ENCODE measurements at regions of chr11 and their contacts with region 1.

Region 1: GRCh38 chr11:10653926-10654810 is 39.4 kb downstream of the IRAG1 start:
- DNase-seq: no peak
- ATAC-seq: peak in 5 of 8 donors; percentile 46 to 68 (median 62)
- H3K4me3 ChIP-seq: no peak overlapping the region
- H3K27ac ChIP-seq: peak overlapping the region in 6 of 10 donors; percentile 21 to 77 (median 42)
- H3K4me1 ChIP-seq: peaks cover 5 to 72% (median 30%) of the 10 kb centered on the region in 9 donors
- H3K27me3 ChIP-seq: no peaks in the 10 kb centered on the region
- CTCF ChIP-seq: peak; percentile 36 to 81 (median 74)

Region 2: DNA sequence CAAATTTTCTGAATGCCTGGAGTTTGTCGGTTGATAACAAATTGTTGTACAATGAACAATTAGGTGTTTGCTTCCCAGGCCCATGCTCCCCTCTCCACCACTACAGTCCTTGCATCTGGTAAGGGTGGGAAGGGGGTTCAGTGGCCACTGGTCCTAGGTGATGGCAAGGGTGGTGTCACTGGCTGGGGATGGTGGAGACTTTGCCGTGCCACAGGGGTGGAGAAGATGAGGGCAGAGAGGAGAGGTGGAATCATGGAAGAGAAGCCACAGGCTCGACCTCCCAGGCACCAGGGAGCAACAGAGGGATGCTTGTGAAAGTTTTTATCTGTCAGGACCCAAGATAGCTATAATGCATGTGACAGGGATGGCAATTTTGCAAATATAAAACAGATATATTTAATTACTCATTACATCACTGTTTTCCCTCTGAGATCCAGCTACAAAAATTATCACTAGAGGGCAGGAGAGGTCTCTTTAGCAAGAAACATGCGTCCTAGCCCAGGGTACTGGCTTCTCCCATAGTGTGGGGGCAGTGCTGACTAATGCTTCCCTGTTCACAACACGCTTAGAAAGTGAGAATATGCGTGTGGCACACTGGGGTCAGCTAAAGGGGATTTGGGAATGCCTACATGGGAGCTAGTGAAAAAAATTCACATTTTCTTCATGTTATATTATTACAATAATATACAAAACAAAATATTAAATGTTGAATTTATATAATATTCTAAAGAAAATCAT is 248.1 kb before region 1 on chr11:
- intact Hi-C with region 1: loop called (anchors 2 to 10 kb)
- DNase-seq: peak in 1 of 2 donors; percentile 79
- ATAC-seq: peak; percentile 85 to 94 (median 90)
- H3K4me3 ChIP-seq: no peak overlapping the region
- H3K27ac ChIP-seq: no peak overlapping the region
- H3K4me1 ChIP-seq: peaks cover 0 to 34% (median 13%) of the 10 kb centered on the region in 9 donors
- H3K27me3 ChIP-seq: no peaks in the 10 kb centered on the region
- CTCF ChIP-seq: peak; percentile 52 to 84 (median 78)

Region 3: GRCh38 chr11:10413268-10413667 is 240.9 kb before region 1 on chr11:
- intact Hi-C with region 1: loop called in 8 of 10 experiments (anchors 5 to 10 kb)
- DNase-seq: peak in 1 of 2 donors; percentile 36
- ATAC-seq: peak in 5 of 8 donors; percentile 38 to 61 (median 58)
- H3K4me3 ChIP-seq: no peak overlapping the region
- H3K27ac ChIP-seq: peak overlapping the region in 1 of 10 donors; percentile 77
- H3K4me1 ChIP-seq: peaks cover 0 to 27% (median 4%) of the 10 kb centered on the region in 9 donors
- H3K27me3 ChIP-seq: no peaks in the 10 kb centered on the region
- CTCF ChIP-seq: peak in 6 of 9 donors; percentile 10 to 48 (median 25)

Region 4: GRCh38 chr11:10514210-10514609 is 140.0 kb before region 1 on chr11:
- intact Hi-C with region 1: loop called in 8 of 10 experiments (anchors 5 to 10 kb)
- DNase-seq: no peak
- ATAC-seq: no peak
- H3K4me3 ChIP-seq: no peak overlapping the region
- H3K27ac ChIP-seq: no peak overlapping the region
- H3K4me1 ChIP-seq: peaks cover 0 to 12% (median 7%) of the 10 kb centered on the region in 9 donors
- H3K27me3 ChIP-seq: no peaks in the 10 kb centered on the region
- CTCF ChIP-seq: peak; percentile 13 to 56 (median 44)

Region 5: GRCh38 chr11:10550503-10551289 is 103.5 kb before region 1 on chr11:
- intact Hi-C with region 1: loop called in 1 of 10 experiments (anchors 10 kb)
- DNase-seq: no peak
- ATAC-seq: no peak
- H3K4me3 ChIP-seq: no peak overlapping the region
- H3K27ac ChIP-seq: no peak overlapping the region
- H3K4me1 ChIP-seq: no peaks in the 10 kb centered on the region
- H3K27me3 ChIP-seq: no peaks in the 10 kb centered on the region
- CTCF ChIP-seq: no peak

Region 6: DNA sequence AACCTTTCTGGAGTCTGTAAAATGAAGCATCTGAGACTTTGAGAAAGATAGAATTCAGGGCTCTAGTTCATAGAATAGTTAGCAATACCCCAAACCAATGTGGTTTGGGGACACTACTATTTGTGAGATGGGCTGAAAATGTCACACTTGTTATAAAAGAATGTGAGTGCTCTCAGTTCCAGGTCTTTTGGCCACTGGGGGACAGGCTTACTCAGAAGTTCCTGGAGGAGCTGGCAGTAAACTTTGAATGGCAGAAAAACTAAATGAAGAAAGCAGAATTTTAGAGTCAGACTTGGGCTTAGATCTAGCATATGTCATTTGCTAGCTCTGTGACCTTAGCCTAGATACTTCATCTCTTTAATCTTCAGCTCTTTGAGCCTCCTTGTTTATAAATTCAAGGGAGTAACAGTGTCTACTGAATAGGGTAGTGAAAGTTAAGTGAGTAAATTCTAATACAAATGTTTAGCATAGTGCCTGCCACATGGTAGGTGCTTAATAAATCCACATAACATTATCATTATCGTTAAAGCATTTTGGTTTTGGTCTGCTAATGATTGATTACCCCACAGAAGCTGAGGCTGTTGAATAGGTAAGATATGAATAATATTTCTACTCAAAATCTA is 89.4 kb before region 1 on chr11:
- intact Hi-C with region 1: loop called in 3 of 10 experiments (anchors 2 to 5 kb)
- DNase-seq: no peak
- ATAC-seq: no peak
- H3K4me3 ChIP-seq: peak overlapping the region in 3 of 10 donors; percentile 0 to 48 (median 25)
- H3K27ac ChIP-seq: peak overlapping the region in 1 of 10 donors; percentile 87
- H3K4me1 ChIP-seq: peaks cover 0 to 34% (median 4%) of the 10 kb centered on the region in 9 donors
- H3K27me3 ChIP-seq: no peaks in the 10 kb centered on the region
- CTCF ChIP-seq: peak in 8 of 9 donors; percentile 7 to 50 (median 42)

Region 7: GRCh38 chr11:10581481-10582019 is 72.6 kb before region 1 on chr11:
- intact Hi-C with region 1: loop called in 1 of 10 experiments (anchors 5 kb)
- DNase-seq: peak in 1 of 2 donors; percentile 33
- ATAC-seq: peak; percentile 66 to 85 (median 74)
- H3K4me3 ChIP-seq: no peak overlapping the region
- H3K27ac ChIP-seq: peak overlapping the region in 6 of 10 donors; percentile 3 to 88 (median 40)
- H3K4me1 ChIP-seq: peaks cover 8 to 61% (median 36%) of the 10 kb centered on the region in 9 donors
- H3K27me3 ChIP-seq: no peaks in the 10 kb centered on the region
- CTCF ChIP-seq: no peak

Region 8: DNA sequence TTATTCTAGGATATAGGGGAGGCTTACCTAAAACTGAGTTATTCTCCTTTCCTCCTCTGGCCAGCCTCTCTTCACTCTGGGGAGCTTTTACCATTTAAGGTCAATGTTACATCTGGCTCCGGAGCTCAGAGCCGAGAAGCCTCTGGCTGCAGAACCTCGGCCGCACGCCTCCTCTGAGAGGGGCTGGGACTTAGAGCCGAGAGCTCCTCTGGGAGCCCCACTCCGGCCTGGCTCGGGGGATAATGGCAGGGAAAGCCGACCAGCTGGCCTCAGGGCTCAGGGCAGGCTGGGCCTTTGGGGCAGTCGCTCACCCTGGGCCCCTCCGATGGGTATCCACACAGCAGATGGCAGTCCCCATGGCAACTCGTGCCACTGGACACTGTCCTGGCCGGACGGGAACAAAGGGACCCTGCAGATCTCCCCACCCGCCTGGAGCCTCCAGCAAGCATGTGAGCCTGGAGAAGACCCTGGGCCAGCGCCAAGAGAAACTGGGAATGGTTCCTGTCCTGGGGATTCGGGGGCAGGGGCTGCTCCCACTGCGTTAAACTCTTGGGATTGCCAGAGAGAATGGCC is 39.4 kb after region 1 on chr11 and contains the start of gene IRAG1:
- intact Hi-C with region 1: no loop called
- DNase-seq: peak; percentile 61 to 71
- ATAC-seq: peak; percentile 74 to 89 (median 80)
- H3K4me3 ChIP-seq: peak within 1 kb of the TSS in 9 of 10 donors; percentile 20 to 54 (median 36)
- H3K27ac ChIP-seq: peak within 1 kb of the TSS in 9 of 10 donors; percentile 25 to 81 (median 65)
- H3K4me1 ChIP-seq: peaks cover 0 to 49% (median 13%) of the 10 kb centered on the region in 9 donors
- H3K27me3 ChIP-seq: peaks cover 0 to 8% (median 0%) of the 10 kb centered on the region in 7 donors
- CTCF ChIP-seq: no peak
- total RNA-seq, gene IRAG1: 2.5 to 8.3 (median 5.3) TPM